HEK293 (cell line): ENCODE measurements at regions of chr7 and their contacts with region 1.

Region 1: DNA sequence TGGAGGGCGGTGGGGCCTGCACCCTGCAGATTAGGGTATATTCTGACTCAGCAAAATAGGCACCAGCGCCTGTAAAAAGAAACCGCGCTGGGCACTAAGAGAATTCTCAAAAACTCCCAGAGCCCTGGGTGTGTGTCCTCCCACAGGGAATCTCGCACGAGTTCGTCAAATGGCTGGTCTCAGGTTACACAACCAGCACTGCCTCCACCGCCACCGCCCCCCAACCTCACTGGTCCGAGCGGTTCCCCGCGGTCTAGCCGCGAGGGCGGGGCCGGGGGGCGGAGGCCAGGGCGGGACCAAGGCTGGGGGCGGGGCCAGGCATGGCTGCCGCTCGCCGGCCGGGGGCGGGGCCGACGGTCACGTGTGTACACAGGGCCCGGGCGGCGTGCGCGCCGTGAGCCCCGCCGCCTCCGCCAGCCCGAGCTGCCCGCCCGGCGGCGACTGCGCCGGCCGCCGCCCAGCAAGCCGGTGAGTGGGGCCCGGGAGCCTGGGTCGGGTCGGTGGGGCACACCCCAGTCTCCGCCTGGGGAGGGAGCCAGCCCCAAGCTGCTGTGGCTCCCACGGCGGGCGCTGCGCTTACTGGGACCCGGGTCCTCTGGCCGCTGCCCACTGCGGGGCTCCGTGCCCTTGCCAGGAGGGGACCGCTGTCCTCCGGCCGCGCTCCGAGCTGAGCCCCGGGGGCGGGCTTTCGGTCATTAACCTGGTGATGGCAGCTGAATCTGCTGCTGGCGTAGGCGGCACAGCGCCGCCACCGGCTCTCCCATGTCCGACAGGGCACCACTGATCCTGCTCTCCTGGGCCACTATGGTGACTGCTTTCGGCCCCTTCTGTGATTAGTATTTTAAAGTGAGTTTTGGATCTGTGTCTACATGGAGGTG is at the start of gene GPR146:
- H3K4me3 ChIP-seq: peak within 1 kb of the TSS; percentile 61
- H3K27ac ChIP-seq: peak within 1 kb of the TSS; percentile 63
- H3K4me1 ChIP-seq: peaks cover 8% of the 10 kb centered on the region
- CTCF ChIP-seq: peak; percentile 79

Region 2: DNA sequence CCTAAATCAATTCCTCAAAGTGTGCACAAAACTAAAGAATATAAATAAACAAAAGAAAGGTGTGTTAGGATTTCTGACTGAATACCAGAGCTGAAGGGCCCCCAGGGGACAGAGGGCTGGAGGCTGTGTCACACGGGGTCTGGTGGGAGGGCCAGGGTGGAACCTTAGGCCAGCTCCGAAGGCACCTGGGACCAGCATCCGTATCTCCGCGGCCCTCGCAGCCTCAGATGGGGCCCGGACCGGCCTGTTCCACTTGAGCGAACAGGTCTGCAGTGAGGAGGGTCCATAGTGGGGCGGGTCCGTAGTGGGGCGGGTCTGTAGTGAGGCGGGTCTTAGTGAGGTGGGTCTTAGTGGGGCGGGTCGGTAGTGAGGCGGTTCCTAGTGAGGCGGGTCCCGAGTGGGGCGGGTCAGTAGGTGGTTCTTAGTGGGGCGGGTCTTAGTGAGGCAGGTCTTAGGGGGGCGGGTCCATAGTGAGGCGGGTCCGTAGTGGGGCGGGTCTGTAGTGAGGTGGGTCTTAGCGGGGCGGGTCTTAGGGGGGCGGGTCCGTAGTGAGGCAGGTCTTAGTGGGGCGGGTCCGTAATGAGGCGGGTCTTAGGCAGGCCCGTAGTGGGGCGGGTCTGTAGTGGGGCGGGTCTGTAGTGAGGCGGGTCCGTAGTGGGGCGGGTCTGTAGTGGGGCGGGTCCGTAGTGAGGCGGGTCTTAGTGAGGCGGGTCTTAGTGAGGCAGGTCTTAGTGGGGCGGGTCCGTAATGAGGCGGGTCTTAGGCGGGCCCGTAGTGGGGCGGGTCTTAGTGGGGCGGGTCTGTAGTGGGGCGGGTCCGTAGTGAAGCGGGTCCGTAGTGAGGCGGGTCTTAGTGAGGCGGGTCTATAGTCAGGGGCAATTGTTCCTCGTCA is 15.0 kb after region 1 on chr7:
- CTCF ChIA-PET with region 1: interaction called, 15 read pairs
- POLR2A ChIA-PET with region 1: no interaction called
- H3K4me3 ChIP-seq: no peak overlapping the region
- H3K27ac ChIP-seq: no peak overlapping the region
- H3K4me1 ChIP-seq: no peaks in the 10 kb centered on the region
- CTCF ChIP-seq: no peak

Region 3: GRCh38 chr7:1086588-1087464 is 42.4 kb after region 1 on chr7:
- CTCF ChIA-PET with region 1: interaction called, 10 read pairs
- POLR2A ChIA-PET with region 1: no interaction called
- H3K4me3 ChIP-seq: no peak overlapping the region; the same call in 1 of the 2 replicates
- H3K27ac ChIP-seq: peak overlapping the region; percentile 43; the same call in 1 of the 2 replicates
- H3K4me1 ChIP-seq: peaks cover 21% of the 10 kb centered on the region
- CTCF ChIP-seq: peak; percentile 81